Transverse colon (tissue), 4 donors: ENCODE measurements at regions of chr12 and their contacts with region 1.

Region 1: DNA sequence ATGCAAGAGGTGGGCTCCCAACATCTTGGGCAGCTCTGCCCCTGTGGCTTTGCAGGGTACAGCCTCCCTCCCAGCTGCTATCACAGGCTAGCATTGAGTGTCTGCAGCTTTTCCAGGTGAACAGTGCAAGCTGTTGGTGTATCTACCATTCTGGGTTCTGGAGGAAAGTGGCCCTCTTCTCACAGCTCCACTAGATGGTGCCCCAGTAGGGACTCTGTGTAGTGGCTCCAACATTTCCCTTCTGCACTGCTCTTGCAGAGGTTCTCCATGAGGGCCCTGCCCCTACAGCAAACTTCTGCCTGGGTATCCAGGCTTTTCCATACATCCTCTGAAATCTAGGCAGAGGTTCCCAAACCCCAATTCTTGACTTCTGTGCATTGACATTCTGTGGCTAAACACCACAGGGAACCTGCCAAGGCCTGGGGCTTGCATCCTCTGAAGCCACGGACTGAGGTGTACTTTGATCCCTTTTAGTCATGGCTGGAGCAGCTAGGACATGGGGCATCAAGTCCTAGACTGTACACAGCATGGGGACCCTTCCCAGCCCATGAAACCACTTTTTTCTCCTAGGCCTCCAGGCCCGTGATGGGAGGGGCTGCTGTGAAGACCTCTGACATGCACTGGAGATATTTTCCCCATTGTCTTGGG is 24.0 kb upstream of the SLC38A1 start:
- DNase-seq: no peak
- H3K4me3 ChIP-seq: no peak overlapping the region
- H3K27ac ChIP-seq: no peak overlapping the region
- H3K4me1 ChIP-seq: no peaks in the 10 kb centered on the region
- H3K27me3 ChIP-seq: no peaks in the 10 kb centered on the region
- CTCF ChIP-seq: no peak
- EP300 ChIP-seq: no peak
- POLR2A ChIP-seq: no peak

Region 2: DNA sequence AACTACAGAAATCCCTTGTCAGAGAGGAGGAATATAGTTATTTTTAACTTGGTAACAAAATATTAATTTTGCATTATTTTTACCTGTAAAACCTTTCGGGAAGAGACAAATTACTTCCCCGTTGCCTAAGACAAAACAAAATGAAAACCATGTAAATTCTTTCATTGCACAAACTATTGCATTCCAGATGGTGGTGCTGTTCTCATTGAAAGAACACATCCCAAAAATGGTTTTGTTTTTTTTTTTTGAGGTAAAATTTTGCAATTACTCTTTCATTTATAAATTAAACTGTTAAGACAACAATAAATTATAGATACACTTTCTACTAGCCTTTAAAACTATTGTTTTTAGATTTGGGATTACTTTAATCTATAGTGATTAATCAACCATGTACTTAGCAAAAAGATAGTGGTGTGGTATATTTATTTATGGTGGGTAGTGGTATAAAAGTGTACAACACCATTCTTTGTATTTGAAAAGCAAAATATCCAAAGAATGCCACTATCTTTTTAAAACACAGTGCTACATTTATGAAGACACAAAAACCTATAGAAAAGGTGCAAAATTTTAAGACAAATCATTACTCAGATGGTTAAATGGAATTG is 139.5 kb before region 1 on chr12:
- in situ Hi-C with region 1: loop called in 1 of 4 experiments (anchors 25 kb)
- intact Hi-C with region 1: no loop called
- DNase-seq: no peak
- H3K4me3 ChIP-seq: no peak overlapping the region
- H3K27ac ChIP-seq: no peak overlapping the region
- H3K4me1 ChIP-seq: peaks cover 5 to 58% (median 28%) of the 10 kb centered on the region in 4 donors
- H3K27me3 ChIP-seq: no peaks in the 10 kb centered on the region
- CTCF ChIP-seq: peak; percentile 49 to 66 (median 60)
- EP300 ChIP-seq: no peak
- POLR2A ChIP-seq: no peak

Region 3: GRCh38 chr12:46473634-46474329 is 180.9 kb after region 1 on chr12:
- in situ Hi-C with region 1: no loop called
- intact Hi-C with region 1: no loop called
- DNase-seq: peak; percentile 75
- H3K4me3 ChIP-seq: peak overlapping the region in 1 of 4 donors; percentile 16
- H3K27ac ChIP-seq: peak overlapping the region; percentile 77 to 84 (median 81)
- H3K4me1 ChIP-seq: peaks cover 11 to 31% (median 23%) of the 10 kb centered on the region in 4 donors
- H3K27me3 ChIP-seq: no peaks in the 10 kb centered on the region
- CTCF ChIP-seq: peak in 1 of 5 experiments; percentile 20
- EP300 ChIP-seq: no peak
- POLR2A ChIP-seq: no peak